G401 (cell line): ENCODE measurements at regions of chr17 and their contacts with region 1.

Region 1: GRCh38 chr17:8057691-8058114 is 18.8 kb downstream of the ALOX15B start:
- DNase-seq: peak; percentile 88

Region 2: DNA sequence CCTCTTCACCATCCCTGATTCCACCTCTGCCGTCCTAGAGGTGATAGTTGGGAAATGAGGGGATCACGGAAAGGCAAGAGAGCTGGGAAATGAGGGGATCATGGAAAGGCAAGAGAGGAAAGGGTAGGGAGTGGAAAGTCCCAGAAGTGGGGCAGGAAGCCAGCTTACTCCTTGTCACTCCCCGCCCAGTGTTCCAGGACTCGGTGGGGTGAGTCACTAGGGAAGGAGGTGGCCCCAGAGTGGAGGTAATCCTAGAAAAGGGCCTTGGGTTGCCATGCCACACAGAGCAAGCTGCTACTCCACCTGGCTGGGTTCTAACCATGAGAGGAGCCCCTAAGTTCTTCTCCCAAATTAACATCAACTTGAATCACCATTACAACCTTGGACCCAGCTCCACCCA is 45.8 kb after region 1 on chr17:
- in situ Hi-C with region 1: loop called (anchors 5 kb)
- DNase-seq: no peak

Region 3: DNA sequence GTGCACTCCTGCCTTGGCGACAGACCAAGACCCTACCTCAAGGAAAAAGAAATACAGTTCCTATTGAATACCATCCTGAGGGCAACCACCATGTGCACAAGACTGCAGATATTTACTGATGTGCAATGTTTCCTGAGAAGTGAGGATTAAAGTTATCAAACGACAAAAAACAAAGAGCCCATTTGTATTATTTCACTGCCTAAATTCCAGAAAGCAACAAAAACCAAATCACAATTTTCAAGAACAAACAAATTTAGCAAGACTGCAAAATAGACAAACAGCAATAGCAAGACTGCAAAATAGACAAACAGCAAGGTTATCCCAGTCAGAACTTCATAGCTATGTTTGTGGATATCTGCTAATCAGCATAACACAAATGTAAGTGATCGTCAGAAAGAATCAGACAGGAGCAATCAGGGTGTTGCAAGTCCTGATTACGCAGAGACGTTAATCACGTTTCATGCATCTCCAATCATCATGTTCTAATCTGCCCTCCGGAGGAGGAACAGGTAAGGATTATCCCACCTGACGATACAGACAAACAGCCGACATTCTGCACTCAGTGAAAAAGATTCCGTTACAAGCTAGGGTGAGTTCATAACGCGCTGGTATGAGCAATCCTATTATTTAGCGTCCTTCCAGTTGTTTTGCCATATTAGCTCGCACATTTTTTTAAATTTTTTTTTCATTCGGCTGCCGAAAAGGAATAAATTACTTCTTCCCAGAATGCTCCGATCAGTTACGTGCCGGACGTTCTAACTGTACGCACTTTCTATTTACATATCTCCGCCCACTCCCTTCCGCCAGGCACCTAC is 115.6 kb after region 1 on chr17:
- in situ Hi-C with region 1: no loop called
- DNase-seq: peak; percentile 99